Transverse colon (tissue), 4 donors: ENCODE measurements at regions of chr2 and their contacts with region 1.

Region 1: GRCh38 chr2:80545420-80546210 is 241.1 kb upstream of the LRRTM1 start:
- DNase-seq: no peak
- H3K4me3 ChIP-seq: no peak overlapping the region
- H3K27ac ChIP-seq: no peak overlapping the region
- H3K4me1 ChIP-seq: no peaks in the 10 kb centered on the region
- H3K27me3 ChIP-seq: no peaks in the 10 kb centered on the region
- CTCF ChIP-seq: no peak
- EP300 ChIP-seq: no peak
- POLR2A ChIP-seq: no peak

Region 2: GRCh38 chr2:80560326-80560725 is 14.7 kb after region 1 on chr2:
- in situ Hi-C with region 1: no loop called
- intact Hi-C with region 1: loop called (anchors 1 kb)
- DNase-seq: no peak
- H3K4me3 ChIP-seq: no peak overlapping the region
- H3K27ac ChIP-seq: no peak overlapping the region
- H3K4me1 ChIP-seq: no peaks in the 10 kb centered on the region
- H3K27me3 ChIP-seq: no peaks in the 10 kb centered on the region
- CTCF ChIP-seq: no peak
- EP300 ChIP-seq: no peak
- POLR2A ChIP-seq: no peak